Sciatic nerve (tissue), 2 donors: ENCODE measurements at regions of chr1 and their contacts with region 1.

Region 1: GRCh38 chr1:173429471-173430402 is 47.4 kb upstream of the PRDX6 start:
- DNase-seq: peak; percentile 91
- ATAC-seq: peak; percentile 99

Region 2: GRCh38 chr1:172466795-172467407 is 962.8 kb before region 1 on chr1:
- intact Hi-C with region 1: no loop called
- DNase-seq: no peak
- ATAC-seq: no peak

Region 3: DNA sequence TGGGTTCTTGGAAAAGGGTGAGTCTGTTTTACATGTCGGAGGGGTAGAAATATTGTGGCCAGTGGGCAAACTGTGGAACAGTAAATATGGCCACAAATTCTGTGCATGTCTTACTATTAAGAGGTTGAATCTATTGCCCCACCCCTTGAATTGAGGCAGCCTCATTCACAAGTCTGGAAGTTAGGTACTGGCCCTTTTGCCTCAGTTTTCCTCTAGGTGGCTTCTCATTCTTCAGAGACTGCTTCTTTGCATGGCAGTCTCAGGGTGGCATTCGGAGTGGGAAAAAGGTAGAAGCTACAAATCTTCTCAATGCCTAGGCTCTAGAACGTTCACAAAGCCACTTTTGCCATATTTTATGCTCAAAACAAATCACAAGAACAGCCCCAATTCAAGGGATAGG is 116.0 kb after region 1 on chr1:
- intact Hi-C with region 1: no loop called
- DNase-seq: no peak
- ATAC-seq: no peak

Region 4: GRCh38 chr1:173824331-173825081 is 394.8 kb after region 1 on chr1 and contains the starts of genes CENPL and DARS2:
- intact Hi-C with region 1: loop called (anchors 10 kb)
- DNase-seq: peak; percentile 98
- ATAC-seq: peak; percentile 99
- total RNA-seq, gene CENPL: 6.2 TPM
- total RNA-seq, gene DARS2: 10.2 TPM